CD8-positive, alpha-beta T cell (primary cell): ENCODE measurements at regions of chr21 and their contacts with region 1.

Region 1: DNA sequence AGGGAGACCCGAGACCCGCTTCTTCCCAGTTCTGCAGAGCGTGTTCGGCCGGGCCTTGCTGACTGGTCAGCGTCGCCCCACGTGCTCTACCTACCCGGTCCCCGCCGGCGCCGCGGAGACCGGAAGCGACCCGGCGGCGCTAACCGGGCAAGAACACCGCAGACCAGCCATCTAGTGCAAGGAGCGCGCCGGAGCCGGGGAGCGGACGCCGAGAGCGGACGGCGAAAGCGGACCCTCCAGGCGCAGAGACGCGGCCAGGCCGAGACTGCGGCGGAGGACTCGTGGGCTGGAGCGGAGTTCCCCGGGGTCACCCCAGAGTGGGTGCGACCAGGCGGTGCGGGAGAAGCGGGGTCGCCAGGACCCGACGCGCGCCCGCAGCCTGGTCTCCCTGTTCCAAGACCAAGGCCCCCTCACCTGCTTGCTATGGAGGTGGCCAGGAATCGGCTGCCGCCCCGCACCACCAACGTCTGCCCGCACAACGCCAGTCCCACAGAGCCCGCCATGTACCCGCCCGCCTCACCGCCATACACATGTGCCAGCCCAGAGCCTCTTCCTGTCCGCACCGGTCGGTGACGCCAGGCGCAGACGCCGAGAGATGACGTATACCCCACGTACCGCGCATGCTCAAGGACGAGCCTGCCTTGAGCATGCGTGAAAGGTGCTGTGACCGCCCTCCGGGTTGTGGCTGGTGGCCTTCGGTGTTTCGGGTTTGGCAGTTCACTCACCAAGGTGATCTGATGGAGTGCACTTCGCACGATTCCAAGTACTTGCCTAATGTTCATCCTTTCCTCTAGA is at the start of gene WDR4:
- DNase-seq: peak; percentile 98 to 100 (median 99)
- ATAC-seq: peak; percentile 87
- H3K4me3 ChIP-seq: peak within 1 kb of the TSS; percentile 65 to 85
- H3K4me3 Mint-ChIP-seq: peak within 1 kb of the TSS; percentile 97
- H3K27ac ChIP-seq: peak within 1 kb of the TSS; percentile 76 to 87
- H3K27ac Mint-ChIP-seq: peak within 1 kb of the TSS; percentile 99
- H3K4me1 ChIP-seq: peaks cover 16% of the 10 kb centered on the region
- H3K4me1 Mint-ChIP-seq: peaks cover 30% of the 10 kb centered on the region
- H3K27me3 ChIP-seq: no peaks in the 10 kb centered on the region
- H3K27me3 Mint-ChIP-seq: no peaks in the 10 kb centered on the region
- CTCF ChIP-seq: no peak
- total RNA-seq, gene WDR4: 13.2 to 13.3 TPM

Region 2: GRCh38 chr21:42892931-42893755 is 14.0 kb after region 1 on chr21 and contains the start of gene NDUFV3:
- CTCF ChIA-PET with region 1: no interaction called
- POLR2A ChIA-PET with region 1: interaction called, 27 read pairs
- intact Hi-C with region 1: loop called (anchors 1 kb)
- DNase-seq: peak; percentile 100
- ATAC-seq: peak; percentile 96
- H3K4me3 ChIP-seq: peak within 1 kb of the TSS; percentile 70 to 94
- H3K4me3 Mint-ChIP-seq: peak within 1 kb of the TSS; percentile 85
- H3K27ac ChIP-seq: peak within 1 kb of the TSS; percentile 92 to 93
- H3K27ac Mint-ChIP-seq: peak within 1 kb of the TSS; percentile 98
- H3K4me1 ChIP-seq: peaks cover 14% of the 10 kb centered on the region
- H3K4me1 Mint-ChIP-seq: peaks cover 23% of the 10 kb centered on the region
- H3K27me3 ChIP-seq: no peaks in the 10 kb centered on the region
- H3K27me3 Mint-ChIP-seq: no peaks in the 10 kb centered on the region
- CTCF ChIP-seq: no peak
- total RNA-seq, gene NDUFV3: 18.0 to 18.2 TPM

Region 3: DNA sequence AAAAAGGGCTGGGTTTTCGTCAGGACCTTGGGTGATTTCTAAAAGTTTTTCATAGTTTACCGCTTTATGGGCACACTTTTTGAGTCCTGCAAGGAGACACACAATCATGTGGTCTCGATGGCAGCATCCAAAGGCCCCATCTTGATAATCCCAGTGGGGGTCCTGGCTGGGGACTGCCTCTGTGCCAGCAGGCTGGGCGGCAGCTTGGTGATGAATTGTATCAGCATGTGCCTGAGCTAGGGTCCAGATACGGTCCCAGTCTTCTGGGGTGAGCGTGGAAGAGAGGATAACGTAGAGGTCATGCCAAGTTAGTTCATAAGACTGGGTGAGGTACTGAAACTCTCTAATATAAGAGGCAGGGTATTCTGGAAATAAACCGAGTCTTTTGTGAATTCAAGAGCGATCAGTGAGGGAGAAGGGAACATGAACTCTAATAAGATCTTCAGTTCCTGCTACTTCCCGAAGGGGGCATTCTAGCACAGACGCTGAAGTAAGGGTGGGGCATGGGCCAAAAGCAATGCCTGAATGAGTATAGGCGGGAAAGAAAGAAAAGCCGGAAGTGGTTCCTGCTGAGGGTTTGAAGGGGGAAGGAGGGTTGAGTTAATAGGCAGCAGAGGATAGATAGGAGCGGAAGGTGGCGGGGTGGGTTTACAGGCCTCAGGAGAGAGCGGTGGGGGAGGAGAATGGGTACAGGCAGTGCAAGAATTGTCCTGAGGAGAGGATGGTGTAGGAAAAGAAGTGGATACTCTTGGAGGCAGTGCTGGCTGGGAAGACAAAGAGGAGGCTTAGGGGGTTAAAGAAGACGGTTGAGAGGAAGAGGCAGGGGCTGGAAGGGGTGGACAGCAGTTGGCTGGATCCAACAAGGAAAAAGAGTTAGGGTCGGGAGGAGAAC is 44.6 kb after region 1 on chr21:
- CTCF ChIA-PET with region 1: no interaction called
- POLR2A ChIA-PET with region 1: no interaction called
- intact Hi-C with region 1: loop called in 1 of 2 experiments (anchors 1 kb)
- DNase-seq: peak; percentile 8 to 83 (median 63)
- ATAC-seq: peak; percentile 97
- H3K4me3 ChIP-seq: no peak overlapping the region
- H3K4me3 Mint-ChIP-seq: no peak overlapping the region
- H3K27ac ChIP-seq: no peak overlapping the region
- H3K27ac Mint-ChIP-seq: no peak overlapping the region
- H3K4me1 ChIP-seq: peaks cover 9% of the 10 kb centered on the region
- H3K4me1 Mint-ChIP-seq: peaks cover 13% of the 10 kb centered on the region
- H3K27me3 ChIP-seq: no peaks in the 10 kb centered on the region
- H3K27me3 Mint-ChIP-seq: no peaks in the 10 kb centered on the region
- CTCF ChIP-seq: peak; percentile 72

Region 4: DNA sequence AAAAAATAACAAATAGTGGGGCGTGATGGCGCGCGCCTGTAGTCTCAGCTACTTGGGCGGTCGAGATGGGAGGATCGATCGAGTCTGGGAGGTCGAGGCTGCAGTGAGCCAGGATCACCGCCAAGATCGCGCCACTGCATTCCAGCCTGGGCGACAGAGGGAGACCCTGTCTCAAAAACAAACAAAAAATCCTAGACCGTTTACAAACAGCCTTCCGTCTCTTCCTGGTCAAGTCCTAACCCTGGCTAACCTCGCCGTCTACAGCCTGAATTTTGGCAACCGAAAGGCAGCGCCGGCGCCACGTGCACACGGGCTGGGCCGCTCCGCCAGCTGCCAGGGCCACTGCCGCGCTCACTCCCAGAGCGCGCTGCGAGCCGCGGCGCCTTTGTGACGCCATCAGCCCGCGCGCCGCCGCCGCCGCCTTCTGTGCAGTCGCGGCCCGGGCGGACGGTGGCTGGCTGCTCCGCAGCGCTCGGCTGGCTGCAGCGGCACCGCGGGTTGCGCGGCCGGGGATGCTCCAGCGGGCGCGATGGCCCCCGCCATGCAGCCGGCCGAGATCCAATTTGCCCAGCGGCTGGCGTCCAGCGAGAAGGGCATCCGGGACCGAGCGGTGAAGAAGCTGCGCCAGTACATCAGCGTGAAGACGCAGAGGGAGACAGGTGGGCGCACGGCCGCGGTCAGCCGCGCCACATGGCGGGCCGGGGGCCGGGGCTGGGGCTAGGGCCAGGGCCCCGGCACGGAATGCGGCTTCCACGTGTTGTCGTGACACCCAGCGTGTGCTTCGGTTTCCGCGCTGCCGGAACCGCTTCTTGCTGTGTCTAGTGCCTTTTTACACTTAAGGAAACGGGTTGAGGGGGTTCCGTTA is 780.2 kb after region 1 on chr21 and contains the starts of genes HSF2BP and RRP1B:
- CTCF ChIA-PET with region 1: interaction called, 3 read pairs
- POLR2A ChIA-PET with region 1: no interaction called
- intact Hi-C with region 1: loop called in 1 of 2 experiments (anchors 5 kb)
- DNase-seq: peak; percentile 65 to 91 (median 73)
- ATAC-seq: peak; percentile 82
- H3K4me3 ChIP-seq: peak within 1 kb of the TSS; percentile 81 to 84
- H3K4me3 Mint-ChIP-seq: peak within 1 kb of the TSS; percentile 93
- H3K27ac ChIP-seq: peak within 1 kb of the TSS; percentile 83 to 86
- H3K27ac Mint-ChIP-seq: peak within 1 kb of the TSS; percentile 92
- H3K4me1 ChIP-seq: peaks cover 31% of the 10 kb centered on the region
- H3K4me1 Mint-ChIP-seq: peaks cover 46% of the 10 kb centered on the region
- H3K27me3 ChIP-seq: no peaks in the 10 kb centered on the region
- H3K27me3 Mint-ChIP-seq: no peaks in the 10 kb centered on the region
- CTCF ChIP-seq: no peak
- total RNA-seq, gene HSF2BP: 0.64 to 1.3 TPM
- total RNA-seq, gene RRP1B: 24.3 to 26.1 TPM